AG04449 (cell line): ENCODE measurements at regions of chr10 and their contacts with region 1.

Region 1: DNA sequence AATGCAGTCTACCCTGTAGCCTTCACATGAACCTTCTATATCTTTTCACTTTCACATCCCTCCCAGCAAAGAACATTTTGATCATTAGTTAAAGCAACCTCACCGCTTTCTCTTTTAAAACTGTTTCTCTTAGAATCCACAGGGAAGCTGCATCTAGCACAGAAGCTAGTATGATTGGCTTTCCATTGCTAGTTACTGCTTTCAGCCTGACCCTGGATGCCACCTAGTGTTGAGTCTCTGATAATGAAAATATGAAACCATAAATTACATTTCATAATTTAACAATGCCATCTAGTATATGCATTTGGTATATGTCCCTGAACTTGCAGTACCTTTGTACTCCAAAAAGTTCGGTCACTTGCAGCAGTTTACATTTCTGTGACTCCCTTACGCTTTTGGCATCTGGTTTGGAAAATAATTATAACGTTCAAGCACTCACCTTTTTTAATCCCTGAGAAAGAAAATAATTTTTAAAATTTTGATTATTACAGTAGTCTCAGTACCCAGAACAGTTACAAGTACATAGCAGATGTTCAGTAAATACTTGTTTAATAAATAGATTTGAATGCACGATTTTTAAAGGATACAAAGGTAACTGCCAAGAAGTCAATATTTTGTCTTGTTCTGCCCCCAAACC is 22.7 kb downstream of the CISD1 start:
- DNase-seq: no peak
- H3K4me3 ChIP-seq: no peak overlapping the region
- CTCF ChIP-seq: peak; percentile 63

Region 2: GRCh38 chr10:58184120-58184670 is 107.5 kb before region 1 on chr10:
- CTCF ChIA-PET with region 1: interaction called, 328 read pairs
- POLR2A ChIA-PET with region 1: no interaction called
- DNase-seq: no peak
- H3K4me3 ChIP-seq: no peak overlapping the region
- CTCF ChIP-seq: no peak

Region 3: DNA sequence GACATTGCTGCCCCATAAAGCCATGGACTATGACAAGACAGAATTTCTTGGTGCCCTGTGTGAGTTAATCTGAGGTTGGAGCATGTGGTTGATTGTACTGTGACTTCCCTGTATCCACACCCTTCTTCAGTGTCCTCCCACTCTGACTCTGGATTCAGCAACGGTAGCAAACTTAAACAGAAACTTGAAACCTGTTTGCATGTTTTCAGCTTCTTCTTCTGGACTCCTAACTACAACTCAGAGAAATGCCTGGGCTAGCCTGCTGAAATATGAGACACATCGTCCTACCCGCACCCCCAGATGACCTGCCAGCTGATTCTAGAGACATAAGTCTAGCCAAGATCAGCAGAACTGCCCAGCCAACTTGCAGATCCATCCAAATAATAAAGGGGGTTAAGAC is 102.4 kb before region 1 on chr10:
- CTCF ChIA-PET with region 1: interaction called, 14 read pairs
- POLR2A ChIA-PET with region 1: no interaction called
- DNase-seq: peak; percentile 21
- H3K4me3 ChIP-seq: no peak overlapping the region
- CTCF ChIP-seq: no peak

Region 4: GRCh38 chr10:58239561-58240169 is 52.0 kb before region 1 on chr10:
- CTCF ChIA-PET with region 1: interaction called, 11 read pairs
- POLR2A ChIA-PET with region 1: no interaction called
- DNase-seq: no peak
- H3K4me3 ChIP-seq: no peak overlapping the region
- CTCF ChIP-seq: no peak

Region 5: DNA sequence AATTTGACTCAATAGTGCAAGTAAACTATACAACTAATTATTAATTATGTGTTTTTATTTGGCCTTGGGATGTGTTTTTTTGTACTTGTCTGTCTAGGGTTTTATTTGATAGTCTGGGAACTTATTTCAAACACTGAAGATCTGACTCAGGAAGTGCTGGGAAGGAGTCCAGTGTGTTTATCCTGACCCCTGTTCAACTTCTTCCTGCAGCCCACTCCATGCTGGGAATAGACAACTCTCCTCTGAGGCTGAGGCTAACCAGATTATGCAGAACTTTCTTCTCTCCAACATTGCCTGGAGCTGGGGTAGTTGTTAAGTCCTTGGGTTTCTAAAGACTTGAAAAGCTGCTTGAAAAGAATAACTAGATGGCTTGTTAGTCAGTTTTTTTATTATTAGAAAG is 15.7 kb before region 1 on chr10:
- CTCF ChIA-PET with region 1: interaction called, 38 read pairs
- POLR2A ChIA-PET with region 1: no interaction called
- DNase-seq: no peak
- H3K4me3 ChIP-seq: no peak overlapping the region
- CTCF ChIP-seq: no peak

Region 6: GRCh38 chr10:58305821-58306220 is 14.2 kb after region 1 on chr10:
- CTCF ChIA-PET with region 1: interaction called, 14 read pairs
- POLR2A ChIA-PET with region 1: no interaction called
- DNase-seq: no peak
- H3K4me3 ChIP-seq: no peak overlapping the region
- CTCF ChIP-seq: no peak

Region 7: GRCh38 chr10:58384999-58385783 is 93.5 kb after region 1 on chr10 and contains the start of gene TFAM:
- CTCF ChIA-PET with region 1: interaction called, 14 read pairs
- POLR2A ChIA-PET with region 1: no interaction called
- DNase-seq: peak; percentile 67
- H3K4me3 ChIP-seq: peak within 1 kb of the TSS; percentile 94
- CTCF ChIP-seq: peak; percentile 80